ENCODE measurements at regions of chrX and their contacts with region 1.

Region 1: GRCh38 chrX:427812-428725 is 41.4 kb upstream of the PPP2R3B start:
- DNase-seq: no peak
- H3K4me3 ChIP-seq: peak overlapping the region in 1 of 3 experiments; percentile 16
- H3K27ac ChIP-seq: no peak overlapping the region
- H3K4me1 ChIP-seq: no peaks in the 10 kb centered on the region
- H3K27me3 ChIP-seq: peaks cover 0 to 4% of the 10 kb centered on the region in 2 experiments
- CTCF ChIP-seq: peak; percentile 3 to 16
- POLR2A ChIP-seq: no peak

Region 2: GRCh38 chrX:1159548-1159947 is 731.5 kb after region 1 on chrX:
- CTCF ChIA-PET with region 1: no interaction called
- POLR2A ChIA-PET with region 1: no interaction called
- dilution Hi-C with region 1: no loop called
- intact Hi-C with region 1: loop called (anchors 5 kb)
- DNase-seq: no peak
- H3K4me3 ChIP-seq: no peak overlapping the region
- H3K27ac ChIP-seq: no peak overlapping the region
- H3K4me1 ChIP-seq: no peaks in the 10 kb centered on the region
- H3K27me3 ChIP-seq: no peaks in the 10 kb centered on the region
- CTCF ChIP-seq: no peak
- POLR2A ChIP-seq: no peak

Region 3: DNA sequence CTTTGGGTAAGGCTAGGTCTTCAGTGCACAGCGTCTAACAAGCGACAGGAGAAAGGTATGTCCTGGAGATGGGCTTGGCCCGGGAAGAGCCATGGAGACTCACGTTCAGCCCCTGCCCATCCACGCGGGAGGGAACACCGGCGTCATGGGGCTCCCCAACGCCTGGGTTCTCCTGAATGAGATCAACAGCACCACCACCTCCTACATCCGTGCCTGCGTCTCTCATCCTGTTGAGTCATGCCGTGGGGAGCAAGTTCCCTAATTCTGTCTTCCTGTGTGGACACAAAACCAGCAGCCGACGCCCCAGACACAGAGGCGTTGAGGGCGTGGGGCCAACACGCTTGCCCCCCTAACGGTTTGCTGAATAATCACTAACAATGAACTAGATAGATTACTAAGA is 888.5 kb after region 1 on chrX:
- CTCF ChIA-PET with region 1: no interaction called
- POLR2A ChIA-PET with region 1: no interaction called
- dilution Hi-C with region 1: no loop called
- intact Hi-C with region 1: loop called (anchors 5 kb)
- DNase-seq: no peak
- H3K4me3 ChIP-seq: no peak overlapping the region
- H3K27ac ChIP-seq: no peak overlapping the region
- H3K4me1 ChIP-seq: no peaks in the 10 kb centered on the region
- H3K27me3 ChIP-seq: no peaks in the 10 kb centered on the region
- CTCF ChIP-seq: no peak
- POLR2A ChIP-seq: no peak

Measured in endothelial cell of umbilical vein (primary cell).